CD8-positive, alpha-beta memory T cell (primary cell): ENCODE measurements at regions of chr12 and their contacts with region 1.

Region 1: DNA sequence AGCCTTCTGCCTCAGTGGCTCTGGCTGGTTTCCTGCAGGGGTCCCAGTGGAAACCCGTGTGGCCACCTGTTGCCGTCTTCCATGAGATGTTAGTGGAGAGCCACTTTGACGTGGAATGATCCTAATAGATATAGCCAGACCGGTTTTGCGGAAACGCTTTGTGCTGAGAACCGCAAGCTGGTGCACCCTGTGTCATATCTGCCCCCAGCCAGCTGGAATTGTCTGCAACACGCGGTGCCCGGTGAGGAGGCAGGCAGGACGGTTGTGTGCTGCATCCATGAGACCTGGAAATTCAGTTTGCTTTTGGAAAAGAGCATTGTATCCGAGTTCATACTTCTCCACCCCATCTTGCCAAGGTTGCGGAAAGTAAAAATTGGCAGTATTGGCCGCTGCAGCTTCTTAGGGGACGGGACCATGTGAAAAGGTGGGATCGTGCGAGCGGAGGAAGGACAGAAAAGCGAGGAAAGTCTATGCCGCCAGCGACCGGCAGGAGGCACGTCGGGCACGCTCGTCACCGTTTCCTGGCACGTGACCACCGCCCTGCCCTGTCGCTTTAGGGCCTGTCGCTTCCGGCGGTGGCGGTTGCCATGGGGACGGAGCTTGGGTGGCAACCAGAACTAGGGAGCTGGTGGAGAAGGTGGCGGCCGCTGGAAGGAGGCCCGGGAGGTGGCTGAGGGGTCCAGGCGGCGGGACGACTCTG is at the start of gene CFAP251:
- DNase-seq: peak; percentile 94 to 99 (median 98)
- H3K4me3 ChIP-seq: peak within 1 kb of the TSS; percentile 54
- H3K4me3 Mint-ChIP-seq: peak within 1 kb of the TSS; percentile 72 to 88 (median 85)
- H3K27ac ChIP-seq: peak within 1 kb of the TSS; percentile 64
- H3K27ac Mint-ChIP-seq: peak within 1 kb of the TSS; percentile 91 to 99 (median 96)
- H3K4me1 ChIP-seq: peaks cover 9% of the 10 kb centered on the region
- H3K4me1 Mint-ChIP-seq: peaks cover 5 to 14% (median 11%) of the 10 kb centered on the region in 3 donors
- H3K27me3 ChIP-seq: no peaks in the 10 kb centered on the region
- H3K27me3 Mint-ChIP-seq: no peaks in the 10 kb centered on the region
- total RNA-seq, gene CFAP251: 0.31 to 0.72 TPM

Region 2: DNA sequence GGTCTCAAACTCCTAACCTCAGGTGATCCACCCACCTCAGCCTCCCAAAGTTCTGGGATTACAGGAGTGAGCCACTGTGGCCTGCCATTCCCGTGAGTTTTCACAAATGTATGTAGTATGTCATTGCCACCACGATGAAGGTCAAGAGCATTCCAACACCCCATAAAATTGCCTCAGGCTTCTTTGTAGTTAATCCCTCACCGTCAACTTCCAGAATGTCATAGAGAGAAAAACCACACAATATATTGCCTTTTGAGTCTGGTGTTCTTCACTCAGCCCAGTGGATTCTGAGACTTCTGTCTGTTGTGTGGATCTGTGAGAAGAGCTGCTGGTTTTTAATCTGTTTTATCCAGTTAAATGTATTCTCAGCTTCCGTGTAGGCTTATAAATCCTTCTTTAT is 12.4 kb before region 1 on chr12:
- CTCF ChIA-PET with region 1: interaction called, 16 read pairs
- POLR2A ChIA-PET with region 1: no interaction called
- DNase-seq: no peak
- H3K4me3 ChIP-seq: no peak overlapping the region
- H3K4me3 Mint-ChIP-seq: no peak overlapping the region
- H3K27ac ChIP-seq: no peak overlapping the region
- H3K27ac Mint-ChIP-seq: peak overlapping the region in 1 of 8 donors; percentile 61
- H3K4me1 ChIP-seq: no peaks in the 10 kb centered on the region
- H3K4me1 Mint-ChIP-seq: peaks cover 5 to 8% (median 6%) of the 10 kb centered on the region in 3 donors
- H3K27me3 ChIP-seq: no peaks in the 10 kb centered on the region
- H3K27me3 Mint-ChIP-seq: no peaks in the 10 kb centered on the region

Region 3: GRCh38 chr12:122003651-122004611 is 85.8 kb after region 1 on chr12:
- CTCF ChIA-PET with region 1: interaction called, 5 read pairs
- POLR2A ChIA-PET with region 1: interaction called, 10 read pairs
- DNase-seq: peak in 1 of 5 donors; percentile 25
- H3K4me3 ChIP-seq: no peak overlapping the region
- H3K4me3 Mint-ChIP-seq: peak overlapping the region in 4 of 7 donors; percentile 32 to 60 (median 38)
- H3K27ac ChIP-seq: no peak overlapping the region
- H3K27ac Mint-ChIP-seq: peak overlapping the region in 1 of 8 donors; percentile 47
- H3K4me1 ChIP-seq: peaks cover 25% of the 10 kb centered on the region
- H3K4me1 Mint-ChIP-seq: peaks cover 25 to 42% (median 37%) of the 10 kb centered on the region in 3 donors
- H3K27me3 ChIP-seq: no peaks in the 10 kb centered on the region
- H3K27me3 Mint-ChIP-seq: peaks cover 6 to 8% of the 10 kb centered on the region in 2 donors